ENCODE measurements at regions of chr4 and their contacts with region 1.

Region 1: GRCh38 chr4:165096776-165097175 is 15.9 kb downstream of the TMEM192 start:
- DNase-seq: peak; percentile 23
- ATAC-seq: peak; percentile 38; the same call in 1 of the 2 replicates
- H3K4me3 ChIP-seq: no peak overlapping the region
- H3K27ac ChIP-seq: no peak overlapping the region
- H3K4me1 ChIP-seq: no peaks in the 10 kb centered on the region
- H3K27me3 ChIP-seq: no peaks in the 10 kb centered on the region
- CTCF ChIP-seq: peak; percentile 59

Region 2: DNA sequence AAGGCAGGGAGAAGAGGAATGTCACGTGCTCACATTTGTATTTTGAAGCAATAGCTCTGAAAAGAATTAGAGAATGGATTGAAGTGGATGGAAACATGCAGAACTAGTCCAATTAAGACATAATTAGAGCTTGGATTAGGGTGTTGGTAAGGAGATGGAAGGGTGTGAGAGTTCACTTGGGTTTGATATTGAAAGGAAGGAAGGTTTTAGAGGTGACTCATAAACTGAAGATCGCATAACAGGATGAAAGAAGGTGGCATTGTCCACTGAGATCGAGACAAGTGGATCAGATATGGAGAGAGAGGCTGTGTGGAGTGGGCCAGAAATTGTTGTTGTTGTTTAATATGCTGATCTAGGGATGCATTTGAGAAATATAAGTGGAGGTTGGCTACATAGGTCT is 586.8 kb before region 1 on chr4:
- CTCF ChIA-PET with region 1: no interaction called
- POLR2A ChIA-PET with region 1: no interaction called
- intact Hi-C with region 1: no loop called
- DNase-seq: peak; percentile 35
- ATAC-seq: no peak; the same call in 1 of the 2 replicates
- H3K4me3 ChIP-seq: no peak overlapping the region
- H3K27ac ChIP-seq: no peak overlapping the region
- H3K4me1 ChIP-seq: peaks cover 10% of the 10 kb centered on the region; the same call in 1 of the 2 replicates
- H3K27me3 ChIP-seq: no peaks in the 10 kb centered on the region
- CTCF ChIP-seq: no peak

Region 3: GRCh38 chr4:164768516-164768915 is 328.3 kb before region 1 on chr4:
- CTCF ChIA-PET with region 1: interaction called, 11 read pairs
- POLR2A ChIA-PET with region 1: no interaction called
- intact Hi-C with region 1: loop called (anchors 5 kb)
- DNase-seq: peak; percentile 33
- ATAC-seq: peak; percentile 40; the same call in 1 of the 2 replicates
- H3K4me3 ChIP-seq: no peak overlapping the region
- H3K27ac ChIP-seq: no peak overlapping the region
- H3K4me1 ChIP-seq: no peaks in the 10 kb centered on the region
- H3K27me3 ChIP-seq: no peaks in the 10 kb centered on the region
- CTCF ChIP-seq: peak; percentile 57

Measured in PC-3 (cell line).